PC-9 (cell line): ENCODE measurements at regions of chr10 and their contacts with region 1.

Region 1: GRCh38 chr10:454860-455259 is 234.6 kb downstream of the DIP2C start:
- DNase-seq: peak; percentile 49 to 53
- H3K4me3 ChIP-seq: no peak overlapping the region
- H3K27ac ChIP-seq: no peak overlapping the region
- H3K4me1 ChIP-seq: no peaks in the 10 kb centered on the region
- H3K27me3 ChIP-seq: peaks cover 53% of the 10 kb centered on the region
- CTCF ChIP-seq: no peak

Region 2: GRCh38 chr10:338518-339311 is 116.1 kb before region 1 on chr10:
- CTCF ChIA-PET with region 1: no interaction called
- POLR2A ChIA-PET with region 1: no interaction called
- intact Hi-C with region 1: no loop called
- DNase-seq: peak in 1 of 2 experiments; percentile 49
- H3K4me3 ChIP-seq: no peak overlapping the region
- H3K27ac ChIP-seq: no peak overlapping the region
- H3K4me1 ChIP-seq: no peaks in the 10 kb centered on the region
- H3K27me3 ChIP-seq: no peaks in the 10 kb centered on the region
- CTCF ChIP-seq: no peak

Region 3: GRCh38 chr10:384538-385305 is 70.1 kb before region 1 on chr10:
- CTCF ChIA-PET with region 1: no interaction called
- POLR2A ChIA-PET with region 1: interaction called, 16 read pairs
- intact Hi-C with region 1: no loop called
- DNase-seq: no peak
- H3K4me3 ChIP-seq: no peak overlapping the region
- H3K27ac ChIP-seq: no peak overlapping the region
- H3K4me1 ChIP-seq: no peaks in the 10 kb centered on the region
- H3K27me3 ChIP-seq: peaks cover 53% of the 10 kb centered on the region
- CTCF ChIP-seq: no peak

Region 4: GRCh38 chr10:775245-776075 is 320.6 kb after region 1 on chr10:
- CTCF ChIA-PET with region 1: no interaction called
- POLR2A ChIA-PET with region 1: no interaction called
- intact Hi-C with region 1: no loop called
- DNase-seq: peak in 1 of 2 experiments; percentile 44
- H3K4me3 ChIP-seq: no peak overlapping the region
- H3K27ac ChIP-seq: no peak overlapping the region
- H3K4me1 ChIP-seq: no peaks in the 10 kb centered on the region
- H3K27me3 ChIP-seq: peaks cover 49% of the 10 kb centered on the region
- CTCF ChIP-seq: no peak